Vagina (tissue), 2 donors: ENCODE measurements at regions of chr16 and their contacts with region 1.

Region 1: GRCh38 chr16:1054660-1055556 is 17.6 kb upstream of the SSTR5 start:
- DNase-seq: no peak
- H3K4me3 ChIP-seq: no peak overlapping the region
- H3K27ac ChIP-seq: no peak overlapping the region
- H3K4me1 ChIP-seq: peaks cover 6% of the 10 kb centered on the region
- H3K27me3 ChIP-seq: no peaks in the 10 kb centered on the region
- CTCF ChIP-seq: peak; percentile 41 to 60 (median 48)
- POLR2A ChIP-seq: no peak

Region 2: GRCh38 chr16:714558-715476 is 340.1 kb before region 1 on chr16 and contains the start of gene METRN:
- intact Hi-C with region 1: loop called (anchors 10 kb)
- DNase-seq: no peak
- H3K4me3 ChIP-seq: peak within 1 kb of the TSS; percentile 58 to 65
- H3K27ac ChIP-seq: no peak within 1 kb of the TSS
- H3K4me1 ChIP-seq: peaks cover 18% of the 10 kb centered on the region
- H3K27me3 ChIP-seq: no peaks in the 10 kb centered on the region
- CTCF ChIP-seq: no peak
- POLR2A ChIP-seq: no peak
- total RNA-seq, gene METRN: 32.2 TPM

Region 3: DNA sequence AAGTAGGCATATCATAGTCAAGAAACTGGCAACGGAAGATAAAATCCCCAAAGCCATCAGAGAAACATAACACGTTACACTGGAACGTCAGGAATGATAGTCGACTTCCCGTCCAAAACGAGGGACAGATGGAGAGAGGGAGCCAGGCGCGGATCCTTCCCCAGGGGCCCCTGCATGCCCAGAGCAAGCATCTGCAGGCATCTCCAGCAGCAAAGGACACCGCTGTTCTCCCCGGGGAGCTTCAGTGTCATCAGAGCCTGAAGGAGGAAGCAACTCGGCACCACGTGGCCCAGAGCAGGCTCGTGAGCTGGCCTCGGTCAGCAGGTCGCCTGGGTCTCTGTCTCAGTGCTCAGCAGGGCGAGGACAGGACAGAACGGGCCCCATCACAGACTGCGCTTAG is 134.2 kb before region 1 on chr16:
- intact Hi-C with region 1: no loop called
- DNase-seq: no peak
- H3K4me3 ChIP-seq: no peak overlapping the region
- H3K27ac ChIP-seq: peak overlapping the region; percentile 53
- H3K4me1 ChIP-seq: no peaks in the 10 kb centered on the region
- H3K27me3 ChIP-seq: no peaks in the 10 kb centered on the region
- CTCF ChIP-seq: no peak
- POLR2A ChIP-seq: no peak